SK-N-SH (cell line): ENCODE measurements at regions of chr7 and their contacts with region 1.

Region 1: GRCh38 chr7:81659697-81660395 is 110.0 kb downstream of the HGF start:
- DNase-seq: no peak
- H3K4me3 ChIP-seq: no peak overlapping the region
- H3K27ac ChIP-seq: no peak overlapping the region
- H3K4me1 ChIP-seq: peaks cover 0 to 8% of the 10 kb centered on the region in 2 experiments; a peak in 2 of 4 replicates
- H3K27me3 ChIP-seq: no peaks in the 10 kb centered on the region
- CTCF ChIP-seq: no peak
- EP300 ChIP-seq: no peak
- RAD21 ChIP-seq: no peak

Region 2: DNA sequence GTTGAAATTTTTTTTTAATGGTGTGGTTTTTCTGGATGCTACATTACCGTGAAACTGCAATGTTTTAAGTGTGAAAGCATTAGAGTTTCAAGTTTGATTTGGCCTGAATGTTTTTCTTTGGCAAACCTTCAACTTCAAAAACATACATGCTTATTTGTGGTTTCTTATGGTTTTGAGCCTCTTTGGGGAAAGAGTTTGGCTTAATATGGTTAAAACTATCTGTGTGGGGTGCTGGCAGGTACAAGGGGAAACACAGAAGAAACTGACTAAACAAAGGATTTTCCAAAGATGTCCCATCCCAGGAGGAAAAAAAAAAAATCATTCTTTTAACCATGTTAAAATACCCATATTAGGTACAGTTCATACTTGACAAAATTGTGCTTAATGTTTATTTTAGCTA is 11.1 kb before region 1 on chr7:
- CTCF ChIA-PET with region 1: interaction called, 12 read pairs
- POLR2A ChIA-PET with region 1: no interaction called
- DNase-seq: no peak
- H3K4me3 ChIP-seq: no peak overlapping the region
- H3K27ac ChIP-seq: no peak overlapping the region
- H3K4me1 ChIP-seq: peaks cover 0 to 3% of the 10 kb centered on the region in 2 experiments; a peak in 1 of 4 replicates
- H3K27me3 ChIP-seq: no peaks in the 10 kb centered on the region
- CTCF ChIP-seq: no peak
- EP300 ChIP-seq: no peak
- RAD21 ChIP-seq: no peak